ENCODE measurements at regions of chr4 and their contacts with region 1.

Region 1: GRCh38 chr4:93698686-93699085 is 129.9 kb upstream of the ATOH1 start:
- DNase-seq: no peak
- H3K4me3 ChIP-seq: no peak overlapping the region
- H3K27ac ChIP-seq: no peak overlapping the region
- H3K4me1 ChIP-seq: no peaks in the 10 kb centered on the region
- H3K27me3 ChIP-seq: no peaks in the 10 kb centered on the region
- CTCF ChIP-seq: no peak
- POLR2A ChIP-seq: no peak

Region 2: DNA sequence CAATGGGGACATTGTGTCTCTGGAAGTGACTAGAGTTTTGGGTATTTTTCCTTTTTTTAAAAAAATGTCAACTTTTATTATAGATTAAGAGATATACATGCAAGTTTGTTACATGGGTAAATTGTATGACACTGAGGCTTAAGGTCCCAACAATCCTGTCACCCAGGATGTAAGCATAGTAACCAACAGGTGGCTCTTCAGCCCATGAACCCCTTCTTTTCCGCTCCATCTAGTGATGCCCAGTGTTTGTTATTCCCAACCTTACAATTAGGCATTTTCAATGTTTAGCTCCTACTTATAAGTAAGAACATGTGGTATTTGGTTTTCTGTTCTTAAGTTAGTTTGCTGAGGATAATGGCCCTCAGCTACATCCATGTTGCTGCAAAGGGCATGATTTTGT is 1292.2 kb before region 1 on chr4:
- CTCF ChIA-PET with region 1: no interaction called
- POLR2A ChIA-PET with region 1: no interaction called
- dilution Hi-C with region 1: no loop called
- intact Hi-C with region 1: no loop called
- DNase-seq: no peak
- H3K4me3 ChIP-seq: no peak overlapping the region
- H3K27ac ChIP-seq: no peak overlapping the region
- H3K4me1 ChIP-seq: no peaks in the 10 kb centered on the region
- H3K27me3 ChIP-seq: no peaks in the 10 kb centered on the region
- CTCF ChIP-seq: no peak
- POLR2A ChIP-seq: no peak

Region 3: GRCh38 chr4:92952426-92952825 is 746.3 kb before region 1 on chr4:
- CTCF ChIA-PET with region 1: no interaction called
- POLR2A ChIA-PET with region 1: no interaction called
- dilution Hi-C with region 1: no loop called
- intact Hi-C with region 1: loop called (anchors 5 kb)
- DNase-seq: no peak
- H3K4me3 ChIP-seq: no peak overlapping the region
- H3K27ac ChIP-seq: no peak overlapping the region
- H3K4me1 ChIP-seq: no peaks in the 10 kb centered on the region
- H3K27me3 ChIP-seq: no peaks in the 10 kb centered on the region
- CTCF ChIP-seq: no peak
- POLR2A ChIP-seq: no peak

Measured in endothelial cell of umbilical vein (primary cell).